Activated B cell treated with CpG ODN at 0.5 μM for 24 hours (primary cell): ENCODE measurements at regions of chr11 and their contacts with region 1.

Region 1: GRCh38 chr11:47176328-47177228 is at the start of gene ARFGAP2:
- DNase-seq: peak; percentile 92
- ATAC-seq: peak; percentile 93
- H3K4me3 Mint-ChIP-seq: peak within 1 kb of the TSS; percentile 98
- H3K27ac Mint-ChIP-seq: peak within 1 kb of the TSS; percentile 99
- H3K4me1 Mint-ChIP-seq: peaks cover 35% of the 10 kb centered on the region
- H3K27me3 Mint-ChIP-seq: no peaks in the 10 kb centered on the region
- CTCF ChIP-seq: no peak
- total RNA-seq, gene ARFGAP2: 145 and 176 TPM in 2 replicates

Region 2: DNA sequence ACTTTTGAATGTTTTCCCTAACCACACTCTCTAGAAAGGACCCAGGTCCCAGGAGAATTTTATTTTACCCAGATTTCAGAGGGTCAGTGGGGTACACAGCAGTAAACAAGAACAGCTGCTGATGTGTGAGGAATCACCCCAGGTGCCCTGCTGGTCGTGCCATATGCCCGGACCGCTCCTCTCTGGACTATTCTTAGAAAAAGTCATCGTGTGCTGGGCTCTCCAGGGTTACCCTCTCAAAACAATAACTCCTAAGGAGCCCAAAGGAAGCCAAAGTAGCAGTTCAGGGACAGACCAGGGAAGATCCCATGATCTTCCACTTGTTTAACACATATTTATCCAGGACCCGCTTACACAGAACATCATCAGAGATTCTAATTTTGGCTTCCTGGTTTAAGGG is 287.9 kb before region 1 on chr11:
- CTCF ChIA-PET with region 1: no interaction called
- POLR2A ChIA-PET with region 1: no interaction called
- intact Hi-C with region 1: no loop called
- DNase-seq: no peak
- ATAC-seq: no peak
- H3K4me3 Mint-ChIP-seq: no peak overlapping the region
- H3K27ac Mint-ChIP-seq: no peak overlapping the region
- H3K4me1 Mint-ChIP-seq: peaks cover 5% of the 10 kb centered on the region
- H3K27me3 Mint-ChIP-seq: peaks cover 6% of the 10 kb centered on the region
- CTCF ChIP-seq: no peak

Region 3: GRCh38 chr11:46936138-46937110 is 240.2 kb before region 1 on chr11 and contains the start of gene CSTPP1:
- CTCF ChIA-PET with region 1: no interaction called
- POLR2A ChIA-PET with region 1: no interaction called
- intact Hi-C with region 1: loop called (anchors 1 kb)
- DNase-seq: peak; percentile 88
- ATAC-seq: peak; percentile 97
- H3K4me3 Mint-ChIP-seq: peak within 1 kb of the TSS; percentile 99
- H3K27ac Mint-ChIP-seq: peak within 1 kb of the TSS; percentile 93
- H3K4me1 Mint-ChIP-seq: peaks cover 17% of the 10 kb centered on the region
- H3K27me3 Mint-ChIP-seq: peaks cover 10% of the 10 kb centered on the region
- CTCF ChIP-seq: no peak
- total RNA-seq, gene CSTPP1: 26.2 and 29.9 TPM in 2 replicates

Region 4: DNA sequence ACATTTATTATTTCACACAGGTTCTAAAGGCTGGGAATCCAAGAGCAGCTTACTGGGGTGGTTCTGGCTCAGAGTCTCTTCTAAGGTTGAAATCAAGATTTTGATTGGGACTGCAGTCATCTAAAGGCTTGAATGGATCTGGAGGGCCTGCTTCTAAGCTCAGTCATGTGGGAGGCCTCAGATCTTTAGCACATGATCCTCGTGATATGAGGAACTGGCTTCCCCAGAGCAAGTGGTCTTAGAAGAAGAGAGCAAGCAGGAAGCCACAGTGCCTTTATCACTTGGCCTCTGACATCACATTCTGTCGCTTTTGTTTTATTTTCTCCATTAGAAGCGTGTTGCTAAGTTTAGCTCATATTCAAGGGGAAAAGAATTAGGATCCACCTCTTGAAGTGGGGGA is 88.8 kb before region 1 on chr11:
- CTCF ChIA-PET with region 1: no interaction called
- POLR2A ChIA-PET with region 1: no interaction called
- intact Hi-C with region 1: no loop called
- DNase-seq: no peak
- ATAC-seq: no peak
- H3K4me3 Mint-ChIP-seq: no peak overlapping the region
- H3K27ac Mint-ChIP-seq: no peak overlapping the region
- H3K4me1 Mint-ChIP-seq: no peaks in the 10 kb centered on the region
- H3K27me3 Mint-ChIP-seq: no peaks in the 10 kb centered on the region
- CTCF ChIP-seq: no peak

Region 5: GRCh38 chr11:47213985-47214564 is 37.5 kb after region 1 on chr11:
- CTCF ChIA-PET with region 1: interaction called, 5 read pairs
- POLR2A ChIA-PET with region 1: interaction called, 32 read pairs
- intact Hi-C with region 1: loop called (anchors 1 kb)
- DNase-seq: peak; percentile 72
- ATAC-seq: peak; percentile 73
- H3K4me3 Mint-ChIP-seq: peak overlapping the region; percentile 99
- H3K27ac Mint-ChIP-seq: peak overlapping the region; percentile 100
- H3K4me1 Mint-ChIP-seq: peaks cover 35% of the 10 kb centered on the region
- H3K27me3 Mint-ChIP-seq: no peaks in the 10 kb centered on the region
- CTCF ChIP-seq: no peak

Region 6: DNA sequence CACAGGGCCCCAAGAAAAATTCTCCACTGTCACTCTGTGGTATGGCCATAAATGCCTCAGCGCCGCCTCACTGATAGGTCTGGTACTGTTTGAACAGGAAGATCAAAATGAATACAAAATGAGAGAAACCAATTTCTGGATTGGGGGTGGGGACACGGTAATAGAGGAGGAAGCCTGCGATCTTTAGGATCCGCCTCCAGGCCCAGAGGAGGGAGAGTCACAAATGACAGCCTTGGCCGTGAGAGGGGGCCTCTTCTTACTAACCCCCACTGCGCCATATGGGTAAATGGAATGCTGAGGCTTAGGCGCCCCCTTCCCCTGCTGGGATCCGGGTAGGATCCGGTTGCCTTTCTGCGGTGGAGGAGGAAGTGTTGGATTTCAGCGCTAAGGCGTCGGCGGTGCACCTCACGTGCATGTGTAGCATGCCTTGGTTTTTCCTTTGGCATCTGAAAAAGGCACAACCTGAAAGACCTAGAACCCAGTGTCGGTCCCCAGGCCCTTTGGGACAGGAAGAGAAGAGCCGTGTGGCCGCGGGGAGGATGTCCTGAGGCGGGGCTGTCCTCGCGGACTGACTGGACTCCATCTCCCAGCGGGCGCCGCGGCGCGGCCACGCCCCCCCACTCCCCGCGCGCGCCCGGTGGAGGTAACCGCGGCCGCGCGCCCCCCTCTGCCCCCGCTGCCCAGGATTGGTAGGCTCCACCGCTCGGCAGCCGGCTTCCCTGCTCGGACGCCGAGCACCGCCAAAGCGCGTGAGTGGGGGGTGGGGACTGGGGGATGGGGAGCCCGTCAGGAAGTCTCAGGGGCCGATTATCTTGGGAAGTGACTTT is 92.6 kb after region 1 on chr11:
- CTCF ChIA-PET with region 1: interaction called, 3 read pairs
- POLR2A ChIA-PET with region 1: interaction called, 4 read pairs
- intact Hi-C with region 1: loop called (anchors 1 kb)
- DNase-seq: peak; percentile 88
- ATAC-seq: peak; percentile 62
- H3K4me3 Mint-ChIP-seq: peak overlapping the region; percentile 93
- H3K27ac Mint-ChIP-seq: peak overlapping the region; percentile 97
- H3K4me1 Mint-ChIP-seq: peaks cover 59% of the 10 kb centered on the region
- H3K27me3 Mint-ChIP-seq: no peaks in the 10 kb centered on the region
- CTCF ChIP-seq: no peak

Region 7: DNA sequence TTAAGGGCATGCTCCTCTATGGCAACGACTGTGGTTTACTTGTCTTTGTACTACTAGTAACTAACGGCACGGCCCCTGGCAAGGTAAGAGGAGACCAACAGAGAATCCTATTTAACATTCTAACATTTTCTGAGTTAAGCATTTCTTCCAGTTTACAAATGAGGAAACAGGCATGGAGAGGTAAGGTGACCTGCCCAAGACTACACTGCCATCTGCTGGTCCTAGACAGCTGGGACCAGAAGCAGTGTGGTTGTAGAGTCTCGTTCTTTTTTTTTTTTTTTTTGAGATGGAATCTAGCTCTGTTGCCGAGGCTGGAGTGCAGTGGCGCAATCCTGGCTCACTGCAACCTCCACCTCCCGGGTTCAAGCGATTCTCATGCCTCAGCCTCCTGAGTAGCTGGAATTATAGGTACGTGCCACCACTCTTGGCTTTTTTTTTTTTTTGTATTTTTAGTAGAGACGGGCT is 277.6 kb after region 1 on chr11:
- CTCF ChIA-PET with region 1: interaction called, 6 read pairs
- POLR2A ChIA-PET with region 1: no interaction called
- intact Hi-C with region 1: loop called (anchors 1 kb)
- DNase-seq: peak; percentile 24
- ATAC-seq: peak; percentile 96
- H3K4me3 Mint-ChIP-seq: no peak overlapping the region
- H3K27ac Mint-ChIP-seq: no peak overlapping the region
- H3K4me1 Mint-ChIP-seq: peaks cover 5% of the 10 kb centered on the region
- H3K27me3 Mint-ChIP-seq: no peaks in the 10 kb centered on the region
- CTCF ChIP-seq: no peak